Lower leg skin (tissue), 4 donors: ENCODE measurements at regions of chr2 and their contacts with region 1.

Region 1: GRCh38 chr2:204325468-204325867 is 219.8 kb upstream of the PARD3B start:
- DNase-seq: peak in 1 of 2 donors; percentile 64
- H3K4me3 ChIP-seq: no peak overlapping the region
- CTCF ChIP-seq: peak in 1 of 3 donors; percentile 70
- POLR2A ChIP-seq: no peak

Region 2: DNA sequence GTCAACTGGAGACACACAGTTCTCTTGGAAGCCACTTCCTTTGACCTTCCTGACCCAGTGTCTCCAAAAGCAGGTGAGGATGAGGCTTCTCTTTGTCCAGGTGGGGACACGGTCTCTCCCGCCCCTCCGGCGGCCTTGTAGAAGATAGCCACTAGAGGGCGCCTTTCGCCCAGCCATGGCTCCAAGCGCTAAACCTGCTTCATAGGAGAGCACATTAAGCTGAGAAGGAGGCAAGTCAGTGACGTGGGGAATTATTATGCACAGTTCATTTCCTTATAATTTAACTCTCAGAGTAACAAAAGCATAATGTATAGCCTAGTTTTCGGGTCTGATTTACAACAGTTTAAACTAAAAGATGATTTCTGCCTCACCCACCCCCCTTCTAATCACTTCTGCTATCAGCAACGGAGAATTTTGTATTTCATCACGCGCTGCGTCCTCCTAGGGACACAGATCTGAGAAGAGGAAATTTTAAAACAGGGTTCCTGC is 180.2 kb before region 1 on chr2:
- intact Hi-C with region 1: loop called (anchors 5 kb)
- DNase-seq: peak; percentile 55 to 94
- H3K4me3 ChIP-seq: no peak overlapping the region
- CTCF ChIP-seq: peak in 1 of 3 donors; percentile 56
- POLR2A ChIP-seq: no peak

Region 3: GRCh38 chr2:204691911-204692510 is 366.5 kb after region 1 on chr2:
- intact Hi-C with region 1: loop called (anchors 10 kb)
- DNase-seq: peak in 1 of 2 donors; percentile 53
- H3K4me3 ChIP-seq: no peak overlapping the region
- CTCF ChIP-seq: peak in 1 of 3 donors; percentile 12
- POLR2A ChIP-seq: no peak

Region 4: DNA sequence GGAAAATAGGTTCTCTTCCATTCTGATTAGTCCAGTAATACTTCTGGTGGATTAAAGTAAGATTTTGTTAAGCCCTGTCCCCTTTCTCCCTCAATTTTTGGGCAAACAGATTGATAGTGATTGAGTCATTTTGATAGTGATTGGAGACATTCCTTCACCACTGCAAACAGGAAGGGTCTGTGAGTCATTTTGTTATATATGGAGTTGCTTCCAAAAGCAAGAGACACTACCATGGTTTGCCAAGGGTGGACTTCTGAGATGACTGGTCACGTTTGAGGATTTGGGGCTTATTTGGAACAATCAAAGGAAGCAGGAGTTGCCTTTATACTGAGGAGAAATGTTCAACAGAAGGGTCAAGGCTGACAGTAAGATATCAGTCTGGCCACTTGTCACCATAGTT is 469.7 kb after region 1 on chr2:
- intact Hi-C with region 1: no loop called
- DNase-seq: no peak
- H3K4me3 ChIP-seq: no peak overlapping the region
- CTCF ChIP-seq: no peak
- POLR2A ChIP-seq: no peak

Region 5: DNA sequence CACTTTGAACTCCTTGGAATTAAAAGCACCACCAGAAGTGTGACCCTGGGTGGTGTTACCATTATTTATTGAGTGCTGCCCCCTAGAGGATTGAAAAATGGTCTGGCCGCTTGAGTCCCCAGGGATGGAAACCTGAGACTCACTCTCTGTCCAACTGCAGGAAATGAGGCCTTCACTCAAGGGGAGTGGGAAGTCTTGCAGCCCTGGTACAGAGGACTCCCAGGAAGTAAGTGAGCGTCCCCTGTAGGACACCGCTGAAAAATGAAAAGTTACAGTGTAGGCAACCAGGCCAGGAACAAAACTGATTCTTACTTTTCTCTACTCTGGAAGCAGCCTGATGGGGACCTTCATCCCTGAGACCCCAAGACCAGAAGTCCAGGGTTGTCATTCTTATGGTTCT is 1354.6 kb after region 1 on chr2:
- intact Hi-C with region 1: loop called (anchors 10 kb)
- DNase-seq: no peak
- H3K4me3 ChIP-seq: no peak overlapping the region
- CTCF ChIP-seq: no peak
- POLR2A ChIP-seq: no peak

Region 6: GRCh38 chr2:205925373-205926337 is 1600.2 kb after region 1 on chr2:
- intact Hi-C with region 1: loop called (anchors 10 kb)
- DNase-seq: peak; percentile 50 to 94
- H3K4me3 ChIP-seq: no peak overlapping the region
- CTCF ChIP-seq: peak in 1 of 3 donors; percentile 26
- POLR2A ChIP-seq: no peak